ENCODE measurements at regions of chr1 and their contacts with region 1.

Region 1: DNA sequence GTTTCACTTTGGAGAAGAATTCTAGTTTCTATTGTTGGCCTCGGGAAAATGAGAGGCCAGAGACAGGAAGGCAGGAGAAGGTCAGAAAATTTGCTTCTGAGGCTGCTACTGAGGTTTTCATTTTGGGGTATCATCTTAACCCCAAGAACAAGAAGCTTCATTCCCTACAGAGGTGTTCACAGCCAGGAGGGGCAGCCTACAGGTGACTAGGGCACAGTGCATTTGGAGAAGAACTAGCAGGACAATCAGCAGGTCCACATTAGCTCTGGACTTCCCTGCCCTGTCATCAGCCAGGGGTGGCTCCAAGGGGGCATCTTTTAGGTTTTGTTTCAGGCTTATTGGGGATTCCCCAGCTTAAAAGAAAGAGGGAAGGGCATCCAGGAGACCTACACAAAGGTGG is 12.1 kb upstream of the ZNF496 start:
- DNase-seq: no peak
- H3K4me3 Mint-ChIP-seq: no peak overlapping the region
- H3K27ac Mint-ChIP-seq: no peak overlapping the region
- H3K4me1 Mint-ChIP-seq: peaks cover 14% of the 10 kb centered on the region
- H3K27me3 Mint-ChIP-seq: peaks cover 2% of the 10 kb centered on the region

Region 2: GRCh38 chr1:247322849-247323586 is 20.8 kb before region 1 on chr1:
- CTCF ChIA-PET with region 1: interaction called, 3 read pairs
- intact Hi-C with region 1: loop called (anchors 2 kb)
- DNase-seq: peak; percentile 40
- H3K4me3 Mint-ChIP-seq: peak overlapping the region; percentile 25
- H3K27ac Mint-ChIP-seq: peak overlapping the region; percentile 77
- H3K4me1 Mint-ChIP-seq: peaks cover 28% of the 10 kb centered on the region
- H3K27me3 Mint-ChIP-seq: no peaks in the 10 kb centered on the region